ENCODE measurements at regions of chr10 and their contacts with region 1.

Region 1: DNA sequence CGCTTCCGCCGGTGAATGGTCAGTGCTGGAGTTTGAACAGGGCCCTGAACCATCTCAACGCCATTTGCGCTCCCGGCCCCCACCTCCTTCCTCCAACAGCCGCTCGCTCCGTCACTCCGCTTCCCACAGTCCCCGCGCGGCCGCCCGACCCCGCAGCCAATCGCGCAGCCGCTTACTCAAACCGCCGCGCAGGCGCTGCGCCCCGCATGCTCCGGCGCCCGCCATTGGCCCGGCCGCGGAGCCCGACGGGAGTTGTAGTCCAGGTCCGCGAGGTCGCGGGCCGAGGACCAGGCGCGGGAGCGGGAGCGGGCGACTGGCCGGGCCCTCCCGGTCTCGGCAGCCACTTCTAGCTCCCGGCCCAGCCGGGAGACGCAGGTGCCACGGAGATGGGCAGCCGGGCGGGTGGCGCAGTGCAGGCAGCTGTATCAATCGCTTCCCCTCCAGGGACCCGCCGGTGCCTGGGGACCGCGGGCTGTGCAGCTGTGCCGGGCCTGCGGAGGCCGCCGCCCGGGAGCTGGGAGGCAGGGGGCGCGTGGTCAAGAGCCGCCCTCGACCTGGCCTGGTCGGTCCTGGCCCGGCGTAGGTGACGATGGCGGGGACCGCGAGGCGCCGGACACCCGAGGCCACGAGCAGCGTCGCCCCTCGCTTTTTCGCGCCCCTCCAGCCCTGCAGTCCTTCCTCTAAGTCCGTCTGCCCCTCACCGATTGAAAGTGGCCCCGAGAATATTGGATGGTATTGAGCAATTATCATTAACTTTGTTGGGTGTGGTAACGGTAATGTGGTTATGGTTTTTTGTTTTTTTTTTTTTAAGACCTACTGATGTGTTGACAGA is at the start of gene WAPL:
- DNase-seq: peak; percentile 95
- ATAC-seq: peak; percentile 97
- H3K4me3 Mint-ChIP-seq: peak within 1 kb of the TSS; percentile 89
- H3K27ac Mint-ChIP-seq: peak within 1 kb of the TSS; percentile 97
- H3K4me1 Mint-ChIP-seq: peaks cover 57% of the 10 kb centered on the region
- H3K27me3 Mint-ChIP-seq: no peaks in the 10 kb centered on the region
- CTCF ChIP-seq: no peak
- total RNA-seq, gene WAPL: 40.9 to 42.0 TPM

Region 2: DNA sequence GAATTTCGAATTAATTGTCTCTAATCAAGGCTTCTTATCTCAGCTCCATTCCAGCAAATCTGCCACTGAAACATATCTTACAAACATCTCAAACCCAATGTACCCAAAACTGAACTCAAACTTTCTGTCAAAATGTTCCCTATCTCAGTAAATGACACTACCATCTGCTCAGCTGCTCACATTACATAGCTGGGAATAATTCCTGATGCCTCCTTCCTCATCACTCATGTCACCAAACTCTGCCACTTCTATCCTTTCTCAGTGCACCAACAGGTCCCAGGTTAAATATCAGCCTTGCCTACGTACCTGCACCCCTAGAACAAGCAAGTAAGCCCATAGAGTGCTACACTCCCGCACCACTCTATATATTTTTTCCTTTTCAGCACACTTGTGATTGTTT is 12.7 kb before region 1 on chr10:
- CTCF ChIA-PET with region 1: no interaction called
- POLR2A ChIA-PET with region 1: interaction called, 13 read pairs
- intact Hi-C with region 1: no loop called
- DNase-seq: no peak
- ATAC-seq: no peak
- H3K4me3 Mint-ChIP-seq: no peak overlapping the region
- H3K27ac Mint-ChIP-seq: no peak overlapping the region
- H3K4me1 Mint-ChIP-seq: peaks cover 44% of the 10 kb centered on the region
- H3K27me3 Mint-ChIP-seq: no peaks in the 10 kb centered on the region
- CTCF ChIP-seq: no peak

Region 3: DNA sequence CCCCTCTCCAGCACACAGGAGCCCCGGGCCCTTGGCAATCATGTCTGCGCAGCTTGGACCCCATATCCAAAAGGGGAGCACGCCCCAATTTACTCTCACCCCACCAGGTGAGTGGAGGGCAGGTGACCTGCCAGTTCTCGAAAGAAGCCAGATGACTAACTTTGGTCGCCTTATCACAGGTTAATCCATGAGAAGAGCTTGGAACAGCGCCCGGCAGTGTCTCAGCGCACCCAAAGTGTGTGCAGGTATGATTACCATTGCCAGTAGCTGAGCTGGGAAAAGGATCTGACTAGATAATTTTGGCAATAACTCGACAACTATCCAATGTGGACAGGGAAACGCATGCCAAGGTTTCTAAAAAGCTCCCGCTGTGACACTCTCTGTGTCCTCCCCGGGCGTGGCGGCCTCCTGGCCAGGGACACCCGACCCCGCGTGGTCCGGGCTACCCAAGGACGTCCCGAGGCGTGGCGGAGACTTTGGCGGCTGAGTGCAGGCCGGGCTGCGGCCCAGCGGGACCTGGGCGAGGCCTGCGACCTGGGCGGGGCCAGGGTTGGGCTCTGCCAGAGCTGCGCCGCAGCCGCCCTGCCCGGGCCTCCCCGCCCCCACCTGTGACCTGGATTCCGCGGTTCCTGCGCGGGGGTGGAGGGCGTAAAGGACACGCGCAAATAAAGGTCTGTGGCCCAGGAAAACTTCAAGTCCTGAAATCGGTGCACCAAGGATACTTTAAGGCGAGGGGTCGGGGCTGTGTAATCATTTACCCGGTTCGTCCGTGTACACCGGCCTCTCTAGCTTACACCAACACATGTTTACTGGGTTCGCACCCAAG is 13.4 kb after region 1 on chr10:
- CTCF ChIA-PET with region 1: interaction called, 9 read pairs
- POLR2A ChIA-PET with region 1: interaction called, 11 read pairs
- intact Hi-C with region 1: no loop called
- DNase-seq: no peak
- ATAC-seq: peak; percentile 9
- H3K4me3 Mint-ChIP-seq: peak overlapping the region; percentile 59
- H3K27ac Mint-ChIP-seq: peak overlapping the region; percentile 68
- H3K4me1 Mint-ChIP-seq: peaks cover 23% of the 10 kb centered on the region
- H3K27me3 Mint-ChIP-seq: no peaks in the 10 kb centered on the region
- CTCF ChIP-seq: no peak